Uterus (tissue), 4 donors: ENCODE measurements at regions of chr17 and their contacts with region 1.

Region 1: GRCh38 chr17:36601303-36602029 is at the start of gene MRM1:
- DNase-seq: peak; percentile 90 to 92
- H3K4me3 ChIP-seq: peak within 1 kb of the TSS; percentile 70 to 84
- H3K27ac ChIP-seq: peak within 1 kb of the TSS; percentile 69 to 77
- H3K4me1 ChIP-seq: peaks cover 0 to 8% of the 10 kb centered on the region in 2 donors
- H3K27me3 ChIP-seq: no peaks in the 10 kb centered on the region
- CTCF ChIP-seq: peak in 2 of 4 experiments; percentile 23 to 50
- POLR2A ChIP-seq: peak; percentile 50 to 61
- total RNA-seq, gene MRM1: 3.7 to 8.5 (median 4.6) TPM in 3 of 4 donors, not detected in the other

Region 2: GRCh38 chr17:36545465-36546417 is 55.7 kb before region 1 on chr17:
- intact Hi-C with region 1: loop called (anchors 5 kb)
- DNase-seq: peak; percentile 95 to 97
- H3K4me3 ChIP-seq: peak overlapping the region; percentile 90 to 99
- H3K27ac ChIP-seq: peak overlapping the region; percentile 98 to 100
- H3K4me1 ChIP-seq: peaks cover 6 to 11% of the 10 kb centered on the region in 2 donors
- H3K27me3 ChIP-seq: no peaks in the 10 kb centered on the region
- CTCF ChIP-seq: peak in 2 of 4 experiments; percentile 9 to 13
- POLR2A ChIP-seq: peak; percentile 43 to 52

Region 3: GRCh38 chr17:37047631-37048104 is 446.2 kb after region 1 on chr17:
- intact Hi-C with region 1: loop called (anchors 10 kb)
- DNase-seq: peak; percentile 72 to 76
- H3K4me3 ChIP-seq: no peak overlapping the region
- H3K27ac ChIP-seq: no peak overlapping the region
- H3K4me1 ChIP-seq: no peaks in the 10 kb centered on the region
- H3K27me3 ChIP-seq: no peaks in the 10 kb centered on the region
- CTCF ChIP-seq: peak; percentile 61 to 84 (median 76)
- POLR2A ChIP-seq: no peak